Psoas muscle (tissue), 8 donors: ENCODE measurements at regions of chr22 and their contacts with region 1.

Region 1: GRCh38 chr22:17348461-17349113 is 20.7 kb upstream of the CECR2 start:
- DNase-seq: no peak
- ATAC-seq: no peak
- H3K4me3 ChIP-seq: no peak overlapping the region
- H3K27ac ChIP-seq: no peak overlapping the region
- H3K4me1 ChIP-seq: no peaks in the 10 kb centered on the region
- H3K27me3 ChIP-seq: no peaks in the 10 kb centered on the region
- CTCF ChIP-seq: no peak

Region 2: DNA sequence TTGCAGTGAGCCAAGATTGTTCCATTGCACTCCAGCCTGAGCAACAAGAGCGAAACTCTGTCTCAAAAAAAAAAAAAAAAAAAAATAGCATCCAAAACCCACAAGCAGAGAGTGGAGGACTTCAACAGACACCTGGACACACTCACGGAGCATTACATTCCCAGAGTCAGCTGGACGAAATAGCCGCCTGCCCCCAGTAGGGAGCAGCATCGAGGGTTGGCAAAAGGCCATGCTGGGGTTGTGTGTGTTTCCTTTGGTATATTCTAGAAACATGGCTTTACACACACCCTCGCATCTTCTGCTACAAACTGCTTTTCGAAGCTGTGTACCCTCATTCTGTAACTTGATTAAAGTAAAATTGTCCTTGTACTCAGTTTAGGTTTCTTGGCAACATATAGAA is 134.6 kb before region 1 on chr22:
- intact Hi-C with region 1: loop called in 1 of 2 experiments (anchors 10 kb)
- DNase-seq: peak; percentile 68 to 83
- ATAC-seq: peak; percentile 68 to 89 (median 84)
- H3K4me3 ChIP-seq: no peak overlapping the region
- H3K27ac ChIP-seq: no peak overlapping the region
- H3K4me1 ChIP-seq: no peaks in the 10 kb centered on the region
- H3K27me3 ChIP-seq: no peaks in the 10 kb centered on the region
- CTCF ChIP-seq: peak; percentile 56

Region 3: GRCh38 chr22:17300926-17301325 is 47.7 kb before region 1 on chr22:
- intact Hi-C with region 1: no loop called
- DNase-seq: no peak
- ATAC-seq: no peak
- H3K4me3 ChIP-seq: no peak overlapping the region
- H3K27ac ChIP-seq: no peak overlapping the region
- H3K4me1 ChIP-seq: no peaks in the 10 kb centered on the region
- H3K27me3 ChIP-seq: no peaks in the 10 kb centered on the region
- CTCF ChIP-seq: no peak

Region 4: GRCh38 chr22:17486313-17486712 is 137.7 kb after region 1 on chr22:
- intact Hi-C with region 1: no loop called
- DNase-seq: peak; percentile 34 to 64
- ATAC-seq: peak; percentile 31 to 46 (median 42)
- H3K4me3 ChIP-seq: no peak overlapping the region
- H3K27ac ChIP-seq: no peak overlapping the region
- H3K4me1 ChIP-seq: peaks cover 24% of the 10 kb centered on the region
- H3K27me3 ChIP-seq: no peaks in the 10 kb centered on the region
- CTCF ChIP-seq: no peak

Region 5: DNA sequence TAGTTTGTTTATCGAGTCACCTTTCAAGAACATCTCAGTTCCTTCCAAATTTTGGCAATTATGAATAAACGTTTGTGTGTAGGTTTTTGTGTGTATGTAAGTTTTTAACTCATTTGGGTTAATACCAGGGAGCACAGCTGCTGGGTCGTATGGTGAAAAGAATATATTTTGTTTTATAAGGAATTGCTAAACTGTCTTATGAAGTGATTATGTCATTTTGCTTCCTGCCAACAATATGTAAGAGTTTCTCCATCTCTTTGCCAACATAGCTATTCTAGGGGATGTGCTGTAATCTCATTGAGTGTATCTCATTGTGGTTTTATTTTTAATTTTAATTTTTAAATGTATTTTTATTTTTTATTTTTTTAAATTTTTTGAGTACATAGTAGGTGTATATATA is 317.3 kb after region 1 on chr22:
- intact Hi-C with region 1: no loop called
- DNase-seq: no peak
- ATAC-seq: peak in 2 of 4 donors; percentile 39 to 40
- H3K4me3 ChIP-seq: no peak overlapping the region
- H3K27ac ChIP-seq: no peak overlapping the region
- H3K4me1 ChIP-seq: peaks cover 6% of the 10 kb centered on the region
- H3K27me3 ChIP-seq: no peaks in the 10 kb centered on the region
- CTCF ChIP-seq: no peak